ENCODE measurements at regions of chr17 and their contacts with region 1.

Region 1: DNA sequence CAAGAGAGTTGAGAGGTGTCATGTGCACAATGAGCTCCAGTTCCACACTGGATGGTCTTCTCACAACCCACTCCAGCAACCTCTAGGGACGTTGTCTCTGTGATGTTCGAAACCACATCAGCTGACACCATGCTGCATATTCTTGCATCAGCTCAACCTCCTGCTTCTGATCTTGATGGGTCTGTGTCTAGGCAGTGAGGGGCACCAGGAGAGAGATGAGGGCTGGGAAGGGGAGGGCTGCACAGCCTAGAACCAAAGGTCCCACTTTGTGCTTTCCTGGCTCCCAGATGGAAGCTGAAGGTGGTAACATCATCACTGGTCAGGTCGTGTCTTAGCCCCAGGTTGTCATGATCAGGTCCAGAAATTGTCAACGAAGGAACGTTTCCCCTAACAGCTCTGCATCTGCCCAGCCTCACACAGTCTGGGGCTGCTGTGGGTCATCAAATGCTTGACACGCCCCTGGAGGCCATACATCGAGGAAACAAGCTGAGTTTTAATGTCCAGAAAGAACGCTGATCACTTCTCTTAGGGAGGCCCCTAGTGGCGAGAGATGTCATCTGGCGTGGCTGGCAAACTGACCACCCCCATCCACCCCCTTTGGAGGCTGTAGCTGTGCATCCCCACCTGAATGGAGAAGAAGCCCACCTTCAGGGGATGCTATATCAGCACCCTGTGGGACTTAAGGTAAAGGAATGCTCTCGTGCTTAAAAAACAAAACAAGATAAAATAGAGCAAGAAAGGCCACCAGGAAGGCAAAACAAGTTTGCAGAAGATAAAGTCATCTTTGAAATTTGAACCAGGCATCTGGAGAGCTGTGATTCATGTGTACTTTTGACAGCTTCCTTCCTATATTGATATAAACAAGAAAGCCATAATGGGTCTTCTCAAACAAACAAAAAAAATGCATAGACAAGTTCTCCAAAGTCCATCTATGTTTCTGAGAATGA is 58.3 kb downstream of the WIPI1 start:
- DNase-seq: peak; percentile 76
- H3K4me3 ChIP-seq: no peak overlapping the region
- H3K27ac ChIP-seq: no peak overlapping the region
- H3K4me1 ChIP-seq: peaks cover 11% of the 10 kb centered on the region
- H3K27me3 ChIP-seq: no peaks in the 10 kb centered on the region
- CTCF ChIP-seq: peak; percentile 90 to 91
- POLR2A ChIP-seq: no peak

Region 2: DNA sequence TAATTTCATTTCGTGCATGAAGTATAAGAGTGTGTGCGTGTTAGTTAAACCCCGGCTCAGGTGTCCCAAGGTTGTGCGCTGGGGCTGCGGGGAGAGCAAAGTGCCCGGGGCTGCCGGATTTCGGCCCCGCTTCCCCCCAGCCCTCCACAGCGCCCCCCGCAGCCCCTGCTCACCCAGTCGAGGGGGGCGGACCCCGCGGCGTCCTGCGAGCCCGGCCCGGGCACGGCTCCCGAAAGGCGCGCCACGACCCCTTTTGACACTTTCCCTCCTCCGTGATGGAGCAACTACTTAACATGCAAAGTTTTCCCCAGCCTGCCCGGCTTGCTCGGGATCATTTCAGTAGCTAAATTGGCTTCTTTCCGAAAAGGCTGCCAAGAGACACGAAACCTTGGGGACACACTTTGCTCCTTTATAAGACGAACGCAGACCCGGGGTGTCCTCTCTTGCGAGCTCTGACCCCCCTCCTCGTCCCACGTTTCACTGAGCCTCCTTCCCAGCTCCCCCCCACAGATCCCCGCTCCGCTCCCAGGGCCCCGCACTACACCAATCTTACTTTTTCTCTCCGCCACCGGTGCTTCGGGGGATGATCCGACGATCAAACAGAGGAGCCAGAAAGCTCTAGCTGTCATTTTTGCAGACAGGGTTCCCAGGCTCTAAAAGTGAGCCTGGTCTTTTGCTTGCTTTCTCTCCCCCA is 403.2 kb before region 1 on chr17:
- CTCF ChIA-PET with region 1: no interaction called
- POLR2A ChIA-PET with region 1: no interaction called
- dilution Hi-C with region 1: no loop called
- intact Hi-C with region 1: no loop called
- DNase-seq: no peak
- H3K4me3 ChIP-seq: peak overlapping the region; percentile 42 to 72 (median 63)
- H3K27ac ChIP-seq: peak overlapping the region; percentile 62
- H3K4me1 ChIP-seq: peaks cover 19% of the 10 kb centered on the region
- H3K27me3 ChIP-seq: no peaks in the 10 kb centered on the region
- CTCF ChIP-seq: peak in 1 of 2 donors; percentile 12
- POLR2A ChIP-seq: no peak

Region 3: DNA sequence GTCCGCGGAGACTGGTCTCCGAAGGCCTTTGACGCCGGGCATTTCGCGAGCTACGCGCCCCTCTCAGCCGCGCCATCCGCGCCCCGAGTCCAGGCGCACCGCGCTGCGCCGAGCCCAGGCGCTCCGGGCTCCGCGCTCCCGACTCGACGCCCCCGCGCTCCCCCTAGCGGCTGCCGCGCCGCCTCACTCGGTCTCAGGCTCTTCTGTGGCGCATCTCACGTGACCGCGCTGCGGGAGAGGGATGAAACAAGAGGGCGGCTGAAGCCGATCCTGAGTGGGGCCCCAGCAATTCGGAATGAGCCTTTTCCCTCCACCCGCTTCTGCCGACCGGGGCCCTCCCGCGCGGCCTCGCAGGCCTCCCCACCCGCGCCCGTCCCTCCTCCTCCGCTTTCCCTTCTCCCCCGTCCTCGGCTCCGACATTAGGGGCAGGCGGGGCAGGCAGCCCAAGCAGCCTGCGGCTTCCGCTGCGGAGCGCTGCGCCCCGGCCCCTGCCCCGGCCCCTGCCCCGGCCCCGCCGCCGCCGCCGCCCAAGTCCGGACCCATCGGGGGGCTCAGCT is 193.6 kb before region 1 on chr17:
- CTCF ChIA-PET with region 1: interaction called, 12 read pairs
- POLR2A ChIA-PET with region 1: no interaction called
- dilution Hi-C with region 1: no loop called
- intact Hi-C with region 1: loop called (anchors 5 kb)
- DNase-seq: peak; percentile 88
- H3K4me3 ChIP-seq: peak overlapping the region; percentile 38 to 56 (median 50)
- H3K27ac ChIP-seq: peak overlapping the region; percentile 52
- H3K4me1 ChIP-seq: peaks cover 4% of the 10 kb centered on the region
- H3K27me3 ChIP-seq: peaks cover 0 to under 1% of the 10 kb centered on the region in 2 experiments
- CTCF ChIP-seq: peak; percentile 84 to 96
- POLR2A ChIP-seq: peak; percentile 77

Region 4: DNA sequence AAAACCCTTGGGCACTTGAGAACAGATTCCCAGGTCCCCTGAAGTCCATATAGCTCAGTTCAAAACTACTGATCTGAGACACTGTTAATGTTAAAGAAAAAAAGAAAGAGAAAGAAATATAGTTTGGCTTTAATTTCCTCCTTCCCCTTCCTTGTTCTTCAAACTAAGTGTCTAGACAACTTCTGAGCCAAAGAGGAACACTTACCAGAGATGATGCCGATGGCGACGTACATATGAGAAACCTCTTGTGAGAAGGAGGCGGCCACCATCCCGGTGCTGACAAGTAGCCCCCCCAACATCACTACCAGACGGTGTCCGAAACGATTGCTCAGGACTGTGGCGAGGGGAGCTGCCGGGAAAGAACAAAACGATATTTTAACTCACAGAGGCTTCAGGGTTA is 125.2 kb before region 1 on chr17:
- CTCF ChIA-PET with region 1: interaction called, 41 read pairs
- POLR2A ChIA-PET with region 1: no interaction called
- dilution Hi-C with region 1: no loop called
- intact Hi-C with region 1: no loop called
- DNase-seq: no peak
- H3K4me3 ChIP-seq: no peak overlapping the region
- H3K27ac ChIP-seq: no peak overlapping the region
- H3K4me1 ChIP-seq: no peaks in the 10 kb centered on the region
- H3K27me3 ChIP-seq: no peaks in the 10 kb centered on the region
- CTCF ChIP-seq: no peak
- POLR2A ChIP-seq: no peak

Region 5: DNA sequence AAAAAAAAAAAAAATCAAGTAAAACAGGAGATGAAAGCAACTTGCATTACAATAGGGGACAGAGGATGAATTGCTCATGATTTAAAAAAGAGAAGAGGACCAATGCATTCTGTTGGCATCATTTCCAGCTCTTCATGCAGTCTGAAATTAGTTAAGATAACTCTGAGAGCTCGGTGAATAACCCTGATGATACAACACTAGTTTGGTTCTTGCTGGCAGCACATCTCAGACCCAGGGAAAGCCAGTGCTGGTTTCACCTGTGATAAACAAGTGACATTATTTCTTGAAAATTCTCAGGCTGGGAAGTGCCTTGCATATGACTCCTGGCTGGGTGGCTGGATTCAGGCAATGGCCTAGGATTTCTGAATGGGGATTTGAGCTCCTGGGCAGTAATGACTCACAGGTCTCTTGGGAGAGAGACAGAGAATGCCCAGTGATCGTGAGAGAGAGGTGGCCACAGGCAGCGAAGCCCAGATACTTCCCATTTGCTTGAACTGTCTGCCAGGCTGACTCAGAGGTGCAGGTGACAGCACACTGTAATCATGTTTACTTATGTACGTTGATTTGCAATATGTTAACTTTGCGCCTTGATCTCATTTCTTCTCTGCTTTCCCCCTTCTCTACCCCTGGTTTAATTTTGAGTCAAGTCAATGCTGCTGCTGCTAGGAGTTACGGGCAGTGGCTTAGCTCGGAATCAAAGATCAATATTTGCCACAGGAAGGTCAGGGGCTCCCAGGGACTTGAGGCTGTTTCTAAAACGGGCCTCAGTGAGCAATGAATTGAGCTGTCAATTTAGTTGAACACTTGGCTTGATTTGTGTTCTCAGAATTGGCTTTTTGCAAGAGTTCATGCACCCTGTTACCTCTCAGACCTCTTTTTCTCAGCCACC is 80.6 kb before region 1 on chr17:
- CTCF ChIA-PET with region 1: interaction called, 18 read pairs
- POLR2A ChIA-PET with region 1: no interaction called
- dilution Hi-C with region 1: no loop called
- intact Hi-C with region 1: no loop called
- DNase-seq: no peak
- H3K4me3 ChIP-seq: no peak overlapping the region
- H3K27ac ChIP-seq: no peak overlapping the region
- H3K4me1 ChIP-seq: no peaks in the 10 kb centered on the region
- H3K27me3 ChIP-seq: no peaks in the 10 kb centered on the region
- CTCF ChIP-seq: no peak
- POLR2A ChIP-seq: no peak

Region 6: GRCh38 chr17:68339561-68339960 is 59.4 kb before region 1 on chr17:
- CTCF ChIA-PET with region 1: interaction called, 12 read pairs
- POLR2A ChIA-PET with region 1: no interaction called
- dilution Hi-C with region 1: no loop called
- intact Hi-C with region 1: no loop called
- DNase-seq: no peak
- H3K4me3 ChIP-seq: no peak overlapping the region
- H3K27ac ChIP-seq: no peak overlapping the region
- H3K4me1 ChIP-seq: peaks cover 5% of the 10 kb centered on the region
- H3K27me3 ChIP-seq: no peaks in the 10 kb centered on the region
- CTCF ChIP-seq: no peak
- POLR2A ChIP-seq: no peak

Region 7: GRCh38 chr17:68377862-68378770 is 20.8 kb before region 1 on chr17:
- CTCF ChIA-PET with region 1: interaction called, 48 read pairs
- POLR2A ChIA-PET with region 1: interaction called, 5 read pairs
- dilution Hi-C with region 1: no loop called
- intact Hi-C with region 1: loop called (anchors 2 kb)
- DNase-seq: peak; percentile 92
- H3K4me3 ChIP-seq: no peak overlapping the region
- H3K27ac ChIP-seq: peak overlapping the region; percentile 75
- H3K4me1 ChIP-seq: peaks cover 32% of the 10 kb centered on the region
- H3K27me3 ChIP-seq: no peaks in the 10 kb centered on the region
- CTCF ChIP-seq: no peak
- POLR2A ChIP-seq: peak; percentile 53

Region 8: DNA sequence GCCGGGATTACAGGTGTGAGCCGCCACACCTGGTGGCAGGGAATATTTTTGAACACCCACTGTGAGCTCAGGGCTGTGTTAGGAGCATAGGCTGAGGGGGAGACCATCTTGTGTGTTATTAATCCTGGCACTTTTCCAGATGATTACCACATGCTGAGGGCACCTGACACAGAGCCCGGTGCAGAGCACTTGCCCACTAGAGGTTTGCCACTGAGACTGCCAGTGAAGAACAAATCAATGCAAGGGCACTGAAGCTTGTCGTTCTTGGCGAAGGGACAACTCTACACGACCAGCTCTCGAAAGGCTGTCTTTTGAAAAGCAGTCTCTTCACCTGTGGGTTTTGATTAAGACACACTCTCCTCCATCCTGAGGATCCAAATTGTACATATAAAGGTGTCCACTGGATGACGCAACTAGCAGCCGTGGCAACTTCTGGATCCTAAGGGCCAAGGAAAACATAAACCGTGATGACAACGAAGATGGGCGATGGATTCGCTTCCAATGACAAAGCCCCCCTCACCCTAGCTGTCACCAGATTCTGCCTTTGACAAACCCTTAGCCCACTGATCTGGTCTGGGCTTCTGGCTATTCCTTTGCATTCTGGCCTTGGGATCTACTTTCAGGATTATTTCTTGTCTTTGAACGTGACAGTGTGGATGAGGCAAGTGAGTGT is 29.7 kb after region 1 on chr17:
- CTCF ChIA-PET with region 1: interaction called, 12 read pairs
- POLR2A ChIA-PET with region 1: no interaction called
- dilution Hi-C with region 1: no loop called
- intact Hi-C with region 1: no loop called
- DNase-seq: no peak
- H3K4me3 ChIP-seq: no peak overlapping the region
- H3K27ac ChIP-seq: no peak overlapping the region
- H3K4me1 ChIP-seq: no peaks in the 10 kb centered on the region
- H3K27me3 ChIP-seq: no peaks in the 10 kb centered on the region
- CTCF ChIP-seq: no peak
- POLR2A ChIP-seq: no peak